ENCODE measurements at regions of chr5 and their contacts with region 1.

Region 1: DNA sequence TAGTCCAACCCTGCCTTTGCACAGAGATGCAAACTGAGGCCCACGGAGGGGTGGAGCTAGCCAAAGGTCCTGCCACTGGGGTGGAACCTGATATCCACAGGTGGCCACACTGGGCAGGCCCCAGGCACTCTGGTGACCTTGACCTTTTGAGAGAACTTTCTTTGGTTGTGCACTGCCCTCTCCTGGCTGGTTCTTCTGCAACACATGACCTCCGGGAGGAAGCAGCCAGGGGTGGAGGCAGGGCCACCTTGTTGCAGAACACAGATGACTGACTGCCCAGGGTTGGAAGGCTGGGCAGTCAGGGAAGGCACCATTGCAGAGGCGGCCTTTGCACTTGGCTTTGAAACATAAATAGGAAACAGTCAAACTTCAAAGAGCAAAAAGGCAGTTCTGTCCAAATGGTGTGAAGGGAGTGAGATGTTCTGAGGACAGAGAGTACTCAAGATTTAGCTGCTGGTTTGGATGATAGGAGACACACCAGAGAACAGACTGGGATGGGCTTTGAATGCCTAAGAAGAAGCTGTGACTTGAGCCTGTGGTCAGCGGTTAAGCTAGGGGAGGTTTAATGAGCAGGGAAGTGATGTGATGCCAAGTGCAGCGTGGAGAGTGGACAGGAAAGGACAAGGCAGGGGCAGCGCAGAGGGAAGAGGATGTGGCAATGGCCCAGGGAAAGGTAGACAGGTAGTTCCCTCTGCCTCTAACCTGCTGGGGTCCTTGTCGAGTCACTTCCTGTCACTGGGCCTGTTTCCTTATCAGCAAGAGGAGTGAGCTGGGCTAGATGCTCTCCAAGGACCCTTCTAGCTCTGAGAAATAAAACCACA is 6.8 kb upstream of the TCOF1 start:
- DNase-seq: peak; percentile 69 to 86
- ATAC-seq: peak; percentile 95 to 98 (median 98)
- H3K4me3 ChIP-seq: no peak overlapping the region
- H3K27ac ChIP-seq: no peak overlapping the region
- H3K4me1 ChIP-seq: peaks cover 7% of the 10 kb centered on the region
- H3K27me3 ChIP-seq: no peaks in the 10 kb centered on the region
- CTCF ChIP-seq: peak; percentile 62

Region 2: GRCh38 chr5:150161242-150162141 is 189.2 kb before region 1 on chr5:
- intact Hi-C with region 1: loop called (anchors 5 to 10 kb)
- DNase-seq: peak; percentile 85 to 92
- ATAC-seq: peak; percentile 80 to 92 (median 88)
- H3K4me3 ChIP-seq: no peak overlapping the region
- H3K27ac ChIP-seq: peak overlapping the region; percentile 55
- H3K4me1 ChIP-seq: peaks cover 19% of the 10 kb centered on the region
- H3K27me3 ChIP-seq: no peaks in the 10 kb centered on the region
- CTCF ChIP-seq: peak; percentile 98

Region 3: DNA sequence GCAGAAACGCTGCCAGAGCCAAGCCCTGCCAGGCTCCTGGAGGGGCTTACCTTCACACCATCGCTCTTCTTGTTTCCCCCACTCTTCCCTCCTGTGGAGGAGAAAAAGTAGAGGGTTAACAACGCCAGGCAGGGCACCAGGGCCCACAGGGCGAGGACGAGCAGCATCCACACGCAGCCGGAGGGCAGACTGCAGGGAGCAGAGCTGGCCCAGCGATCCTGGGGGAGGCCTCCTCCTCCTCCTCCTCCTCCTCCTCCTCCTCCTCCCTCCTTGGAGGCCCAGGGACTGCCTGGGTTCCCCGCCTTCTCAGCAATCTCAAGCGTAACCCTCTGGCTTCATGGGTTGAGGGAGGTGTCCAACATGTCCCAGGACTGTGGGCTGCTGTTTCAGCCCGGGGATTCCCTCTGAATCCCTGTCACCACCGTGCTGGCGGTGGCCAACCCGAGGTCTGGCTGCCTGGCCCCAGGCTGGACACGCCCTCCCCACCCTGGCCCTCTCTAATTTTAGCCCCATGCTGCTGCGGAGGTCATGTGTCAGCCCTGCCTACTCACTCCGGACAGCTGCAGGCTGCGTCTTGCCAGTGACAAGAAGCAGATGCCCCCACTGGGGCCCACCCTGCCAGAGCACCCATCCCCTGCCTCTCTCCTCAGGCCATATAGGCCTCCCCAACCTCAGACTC is 105.5 kb before region 1 on chr5:
- intact Hi-C with region 1: loop called in 1 of 2 experiments (anchors 5 kb)
- DNase-seq: peak; percentile 83 to 95
- ATAC-seq: peak; percentile 83 to 90 (median 86)
- H3K4me3 ChIP-seq: peak overlapping the region; percentile 73
- H3K27ac ChIP-seq: peak overlapping the region; percentile 100
- H3K4me1 ChIP-seq: peaks cover 48% of the 10 kb centered on the region
- H3K27me3 ChIP-seq: no peaks in the 10 kb centered on the region
- CTCF ChIP-seq: no peak

Region 4: DNA sequence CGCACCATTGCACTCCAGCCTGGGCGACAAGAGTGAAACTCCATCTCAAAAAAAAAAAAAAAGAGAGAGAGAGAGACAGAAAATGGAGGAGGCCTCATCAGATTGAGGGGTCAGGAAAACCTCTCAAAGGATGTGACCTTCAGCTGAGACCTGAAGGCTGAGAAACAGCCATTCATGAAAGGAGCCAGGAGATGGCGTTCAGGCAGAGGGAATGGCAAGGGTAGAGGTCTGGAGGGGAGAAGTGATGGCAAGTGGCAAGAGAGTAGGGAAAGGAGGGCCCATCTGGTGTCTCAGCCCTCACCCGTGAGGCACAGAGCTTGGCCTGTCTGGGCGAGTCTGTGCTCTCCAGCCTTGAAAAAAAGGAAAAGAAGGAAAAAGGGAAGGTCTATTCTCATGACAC is 78.2 kb before region 1 on chr5:
- intact Hi-C with region 1: loop called in 1 of 2 experiments (anchors 5 kb)
- DNase-seq: no peak
- ATAC-seq: no peak
- H3K4me3 ChIP-seq: no peak overlapping the region
- H3K27ac ChIP-seq: no peak overlapping the region
- H3K4me1 ChIP-seq: peaks cover 9% of the 10 kb centered on the region
- H3K27me3 ChIP-seq: no peaks in the 10 kb centered on the region
- CTCF ChIP-seq: peak; percentile 16

Region 5: DNA sequence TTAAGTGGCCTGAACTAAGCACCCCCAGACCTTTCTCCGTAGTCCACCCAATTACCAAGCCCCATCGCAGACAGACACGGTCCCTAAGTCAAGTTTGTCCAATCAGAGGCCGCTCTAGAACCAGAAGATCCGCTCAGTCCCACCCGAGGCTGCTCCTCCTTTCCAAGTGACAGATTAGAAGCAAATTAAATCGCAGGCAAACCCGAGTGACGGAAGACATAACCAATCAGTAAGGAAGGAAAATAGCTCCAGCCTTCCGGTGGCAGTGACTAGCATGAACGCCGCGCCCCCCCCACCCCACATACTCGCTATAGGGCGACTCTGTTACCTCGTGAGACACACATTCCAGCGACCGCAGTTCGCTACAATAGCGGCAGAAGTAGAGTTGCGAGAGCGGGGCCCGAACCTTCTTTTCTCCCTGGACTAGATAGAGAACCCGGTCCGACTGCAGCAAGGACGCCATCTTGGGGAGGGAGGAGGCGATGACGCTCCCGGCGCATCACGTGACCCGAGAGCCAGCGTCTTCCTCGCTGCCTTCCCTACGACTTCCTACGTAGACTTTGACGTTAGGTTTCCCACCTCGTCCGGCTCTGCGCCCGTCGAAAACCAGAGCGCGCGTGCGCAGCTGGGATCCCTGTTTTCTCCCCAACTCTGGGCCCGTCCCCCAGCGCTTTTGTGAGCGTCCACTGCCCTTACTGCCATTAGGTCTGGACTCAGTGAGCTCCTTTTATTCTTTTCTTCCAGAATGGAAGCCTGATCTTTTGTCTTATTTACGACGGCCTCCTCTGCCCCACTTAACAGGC is 408.0 kb after region 1 on chr5 and contains the start of gene DCTN4:
- intact Hi-C with region 1: no loop called
- DNase-seq: peak; percentile 96 to 98
- ATAC-seq: peak; percentile 94 to 96 (median 94)
- H3K4me3 ChIP-seq: peak within 1 kb of the TSS; percentile 77
- H3K27ac ChIP-seq: peak within 1 kb of the TSS; percentile 94
- H3K4me1 ChIP-seq: peaks cover 15% of the 10 kb centered on the region
- H3K27me3 ChIP-seq: no peaks in the 10 kb centered on the region
- CTCF ChIP-seq: no peak
- total RNA-seq, gene DCTN4: 50.9 to 81.5 (median 70.6) TPM